ENCODE measurements at regions of chr16 and their contacts with region 1.

Region 1: GRCh38 chr16:9647981-9648712 is 534.1 kb downstream of the GRIN2A start:
- DNase-seq: peak; percentile 26
- H3K4me3 ChIP-seq: no peak overlapping the region
- H3K27ac ChIP-seq: no peak overlapping the region
- H3K4me1 ChIP-seq: no peaks in the 10 kb centered on the region
- H3K27me3 ChIP-seq: no peaks in the 10 kb centered on the region
- CTCF ChIP-seq: peak; percentile 56

Region 2: DNA sequence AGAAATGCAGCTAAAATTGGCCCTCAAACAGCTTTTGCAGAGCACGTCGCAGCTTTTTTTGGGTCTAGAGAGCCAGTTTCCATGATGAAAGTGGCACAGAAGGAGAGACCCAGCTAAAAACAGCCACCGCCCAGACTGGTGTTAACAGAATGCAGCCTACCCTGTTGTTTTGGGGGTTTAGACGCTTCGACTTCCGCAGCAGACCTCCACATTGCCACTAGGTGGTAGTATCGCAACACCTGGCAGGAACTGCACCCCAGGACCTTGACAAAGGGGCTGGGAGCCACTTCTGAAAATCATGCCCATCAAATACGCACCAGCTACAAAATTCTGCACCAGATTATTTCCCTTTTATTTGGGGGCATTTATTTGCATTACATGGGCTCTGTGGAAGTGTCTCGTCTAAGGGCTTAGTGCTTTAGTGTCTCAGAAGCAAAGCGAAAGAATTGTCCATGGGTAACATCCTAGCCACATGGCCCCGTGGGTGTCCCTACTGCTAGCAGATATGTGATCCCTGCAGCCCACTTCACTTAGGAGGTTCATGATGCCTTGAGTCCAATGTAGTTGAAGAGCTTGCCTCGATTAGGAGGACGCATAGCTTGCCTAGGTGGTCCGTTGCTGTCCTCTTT is 389.6 kb before region 1 on chr16:
- intact Hi-C with region 1: loop called (anchors 10 kb)
- DNase-seq: peak; percentile 46
- H3K4me3 ChIP-seq: no peak overlapping the region
- H3K27ac ChIP-seq: no peak overlapping the region
- H3K4me1 ChIP-seq: no peaks in the 10 kb centered on the region
- H3K27me3 ChIP-seq: no peaks in the 10 kb centered on the region
- CTCF ChIP-seq: peak; percentile 51

Measured in colonic mucosa (tissue), 4 donors.